ENCODE measurements at regions of chr14 and their contacts with region 1.

Region 1: GRCh38 chr14:75648066-75648838 is 12.4 kb downstream of the ERG28 start:
- DNase-seq: peak; percentile 81 to 87
- H3K4me3 ChIP-seq: no peak overlapping the region
- H3K4me3 Mint-ChIP-seq: peak overlapping the region; percentile 35
- H3K27ac Mint-ChIP-seq: peak overlapping the region; percentile 90
- H3K4me1 ChIP-seq: peaks cover 55% of the 10 kb centered on the region
- H3K4me1 Mint-ChIP-seq: peaks cover 40% of the 10 kb centered on the region
- H3K27me3 ChIP-seq: no peaks in the 10 kb centered on the region
- H3K27me3 Mint-ChIP-seq: no peaks in the 10 kb centered on the region
- CTCF ChIP-seq: no peak

Region 2: GRCh38 chr14:75619548-75619947 is 28.7 kb before region 1 on chr14:
- CTCF ChIA-PET with region 1: no interaction called
- POLR2A ChIA-PET with region 1: no interaction called
- intact Hi-C with region 1: loop called (anchors 1 kb)
- DNase-seq: no peak
- H3K4me3 ChIP-seq: no peak overlapping the region
- H3K4me3 Mint-ChIP-seq: no peak overlapping the region
- H3K27ac Mint-ChIP-seq: no peak overlapping the region
- H3K4me1 ChIP-seq: peaks cover 43% of the 10 kb centered on the region
- H3K4me1 Mint-ChIP-seq: peaks cover 23% of the 10 kb centered on the region
- H3K27me3 ChIP-seq: no peaks in the 10 kb centered on the region
- H3K27me3 Mint-ChIP-seq: no peaks in the 10 kb centered on the region
- CTCF ChIP-seq: no peak

Region 3: DNA sequence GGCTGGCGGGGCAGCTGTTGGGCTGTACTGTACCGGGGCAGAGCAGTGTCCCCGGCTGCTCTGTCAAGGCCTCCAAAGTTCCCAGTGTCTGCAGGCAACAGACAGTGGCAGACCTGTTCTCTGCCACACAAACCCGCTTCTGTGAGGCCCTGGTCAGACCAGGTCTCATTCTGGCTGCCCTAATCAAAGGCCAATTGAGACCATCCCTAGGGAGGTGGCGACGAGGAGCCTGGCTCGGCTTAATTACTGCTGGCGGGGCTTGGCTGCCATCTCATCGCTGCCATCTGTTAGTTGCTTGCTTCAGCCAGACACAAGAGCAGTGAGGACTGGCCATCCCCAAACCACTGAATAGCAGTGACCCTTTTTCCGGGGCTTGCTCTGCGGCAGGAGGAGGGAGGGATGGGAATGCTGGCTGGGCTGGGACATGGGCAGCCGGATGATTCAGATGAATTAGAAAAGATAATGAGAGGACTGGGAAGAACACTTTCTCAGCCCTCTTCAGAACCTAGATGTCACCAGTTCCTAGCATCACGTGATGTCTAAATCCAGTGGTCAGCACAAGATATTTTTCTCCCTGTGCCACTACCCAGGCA is 12.1 kb before region 1 on chr14:
- CTCF ChIA-PET with region 1: interaction called, 3 read pairs
- POLR2A ChIA-PET with region 1: interaction called, 11 read pairs
- intact Hi-C with region 1: loop called (anchors 2 kb)
- DNase-seq: no peak
- H3K4me3 ChIP-seq: no peak overlapping the region
- H3K4me3 Mint-ChIP-seq: no peak overlapping the region
- H3K27ac Mint-ChIP-seq: no peak overlapping the region
- H3K4me1 ChIP-seq: peaks cover 20% of the 10 kb centered on the region
- H3K4me1 Mint-ChIP-seq: peaks cover 10% of the 10 kb centered on the region
- H3K27me3 ChIP-seq: no peaks in the 10 kb centered on the region
- H3K27me3 Mint-ChIP-seq: no peaks in the 10 kb centered on the region
- CTCF ChIP-seq: no peak

Region 4: DNA sequence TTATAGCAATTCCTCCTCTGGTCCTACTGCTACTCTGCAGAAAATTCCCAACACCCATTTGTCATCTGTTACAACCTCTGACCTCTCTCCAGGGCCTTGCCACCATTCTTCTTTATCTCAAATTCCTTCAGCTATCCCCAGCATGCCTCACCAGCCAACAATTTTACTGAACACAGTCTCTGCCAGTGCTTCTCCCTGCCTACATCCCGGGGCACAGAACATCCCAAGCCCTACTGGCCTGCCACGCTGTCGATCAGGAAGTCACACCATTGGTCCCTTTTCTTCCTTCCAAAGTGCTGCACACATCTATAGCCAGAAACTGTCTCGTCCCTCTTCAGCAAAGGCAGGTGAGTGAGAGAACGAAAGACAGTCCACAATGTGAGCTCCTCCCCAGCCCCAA is 134.9 kb after region 1 on chr14:
- CTCF ChIA-PET with region 1: no interaction called
- POLR2A ChIA-PET with region 1: interaction called, 17 read pairs
- intact Hi-C with region 1: no loop called
- DNase-seq: no peak
- H3K4me3 ChIP-seq: no peak overlapping the region
- H3K4me3 Mint-ChIP-seq: no peak overlapping the region
- H3K27ac Mint-ChIP-seq: no peak overlapping the region
- H3K4me1 ChIP-seq: peaks cover 5% of the 10 kb centered on the region
- H3K4me1 Mint-ChIP-seq: peaks cover 6% of the 10 kb centered on the region
- H3K27me3 ChIP-seq: no peaks in the 10 kb centered on the region
- H3K27me3 Mint-ChIP-seq: no peaks in the 10 kb centered on the region
- CTCF ChIP-seq: no peak